ENCODE measurements at regions of chr2 and their contacts with region 1.

Region 1: DNA sequence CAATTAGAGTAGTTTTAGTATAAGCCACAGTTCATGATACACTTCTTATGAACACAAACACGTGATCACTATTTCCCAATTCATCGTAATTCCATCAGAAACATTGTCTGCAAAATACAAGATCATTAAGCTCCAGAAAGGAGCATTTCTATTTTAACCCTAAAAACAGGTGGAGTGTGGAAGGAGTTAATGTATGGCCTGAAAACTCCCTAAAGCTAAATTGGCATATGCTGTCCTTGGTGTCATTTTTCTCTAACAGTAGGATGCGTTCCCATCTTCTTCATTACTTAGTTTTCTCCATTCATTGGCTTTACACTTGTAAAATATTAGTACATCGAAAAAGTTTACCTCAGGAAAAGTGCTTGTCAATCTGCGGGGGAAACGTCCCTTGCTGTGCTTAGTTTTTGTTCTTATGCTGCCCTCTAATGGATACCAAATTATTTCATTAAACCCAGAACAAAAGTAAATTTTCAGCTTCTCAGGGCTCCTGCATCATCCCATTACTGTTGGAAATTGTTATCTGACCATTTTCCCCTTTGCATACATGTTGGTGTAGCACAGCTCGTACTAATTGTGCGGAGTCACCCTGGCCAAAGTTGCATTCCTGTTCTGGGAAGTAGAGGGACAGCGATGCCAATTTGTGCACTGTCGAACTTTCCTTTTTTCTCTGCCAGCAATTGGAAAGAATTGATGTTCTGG is 153.4 kb downstream of the GPD2 start:
- DNase-seq: peak; percentile 16
- CTCF ChIP-seq: peak; percentile 34

Region 2: DNA sequence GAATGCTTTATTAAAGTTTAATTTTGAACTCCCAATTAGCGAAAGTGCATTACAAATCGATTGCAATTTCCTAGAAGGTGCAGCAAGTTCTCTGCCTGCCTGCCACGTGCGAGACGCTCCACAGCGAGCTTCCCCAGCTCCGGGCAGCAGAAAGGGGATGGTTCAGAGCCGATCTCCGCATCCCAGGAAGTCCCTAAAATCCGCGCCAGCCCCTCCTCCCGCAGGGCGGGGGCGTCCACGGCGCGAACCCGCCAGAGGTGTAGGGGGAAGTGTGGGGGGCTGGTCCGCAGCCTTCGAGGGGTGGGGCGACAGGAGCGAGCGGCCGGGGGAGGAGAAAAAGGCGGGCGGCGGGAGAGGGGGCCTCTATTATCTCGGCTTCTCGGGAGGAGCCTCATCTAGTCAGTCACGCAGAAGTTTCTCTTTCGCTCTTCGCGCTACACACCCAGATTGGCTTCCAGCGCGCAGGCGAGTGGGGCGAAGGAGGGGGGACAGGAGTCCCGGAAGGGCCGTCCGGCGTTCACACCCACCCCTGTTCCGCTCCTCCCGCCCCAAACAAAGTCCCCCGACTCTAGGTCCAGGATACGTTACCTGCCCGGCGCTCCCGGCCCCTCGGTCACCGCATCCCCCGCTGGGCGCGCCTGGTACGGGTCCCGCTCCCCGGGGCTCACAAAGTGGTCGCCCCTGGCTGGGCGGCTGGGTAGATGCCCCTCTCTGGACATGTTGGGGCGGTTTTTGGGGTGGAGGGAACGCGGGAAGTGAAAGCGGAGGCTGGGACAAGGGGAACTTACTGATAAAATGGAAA is 247.9 kb before region 1 on chr2:
- in situ Hi-C with region 1: loop called (anchors 10 kb)
- DNase-seq: peak; percentile 91
- CTCF ChIP-seq: no peak

Region 3: GRCh38 chr2:157194097-157194688 is 604.7 kb after region 1 on chr2:
- in situ Hi-C with region 1: loop called (anchors 25 kb)
- DNase-seq: peak; percentile 59
- CTCF ChIP-seq: peak; percentile 53

Measured in GM13976 (cell line).